Activated naive CD4-positive, alpha-beta T cell treated with anti-CD3 and anti-CD28 coated beads, Interleukin-2, amount 10 ng/mL, durations not matched to agents 7 days and 5 days (primary cell): ENCODE measurements at regions of chr5 and their contacts with region 1.

Region 1: GRCh38 chr5:160439205-160439600 is 17.5 kb downstream of the PTTG1 start:
- DNase-seq: peak; percentile 88
- H3K4me3 Mint-ChIP-seq: peak overlapping the region; percentile 80
- H3K27ac Mint-ChIP-seq: peak overlapping the region; percentile 72
- H3K4me1 Mint-ChIP-seq: peaks cover 27% of the 10 kb centered on the region
- H3K27me3 Mint-ChIP-seq: peaks cover 18% of the 10 kb centered on the region

Region 2: DNA sequence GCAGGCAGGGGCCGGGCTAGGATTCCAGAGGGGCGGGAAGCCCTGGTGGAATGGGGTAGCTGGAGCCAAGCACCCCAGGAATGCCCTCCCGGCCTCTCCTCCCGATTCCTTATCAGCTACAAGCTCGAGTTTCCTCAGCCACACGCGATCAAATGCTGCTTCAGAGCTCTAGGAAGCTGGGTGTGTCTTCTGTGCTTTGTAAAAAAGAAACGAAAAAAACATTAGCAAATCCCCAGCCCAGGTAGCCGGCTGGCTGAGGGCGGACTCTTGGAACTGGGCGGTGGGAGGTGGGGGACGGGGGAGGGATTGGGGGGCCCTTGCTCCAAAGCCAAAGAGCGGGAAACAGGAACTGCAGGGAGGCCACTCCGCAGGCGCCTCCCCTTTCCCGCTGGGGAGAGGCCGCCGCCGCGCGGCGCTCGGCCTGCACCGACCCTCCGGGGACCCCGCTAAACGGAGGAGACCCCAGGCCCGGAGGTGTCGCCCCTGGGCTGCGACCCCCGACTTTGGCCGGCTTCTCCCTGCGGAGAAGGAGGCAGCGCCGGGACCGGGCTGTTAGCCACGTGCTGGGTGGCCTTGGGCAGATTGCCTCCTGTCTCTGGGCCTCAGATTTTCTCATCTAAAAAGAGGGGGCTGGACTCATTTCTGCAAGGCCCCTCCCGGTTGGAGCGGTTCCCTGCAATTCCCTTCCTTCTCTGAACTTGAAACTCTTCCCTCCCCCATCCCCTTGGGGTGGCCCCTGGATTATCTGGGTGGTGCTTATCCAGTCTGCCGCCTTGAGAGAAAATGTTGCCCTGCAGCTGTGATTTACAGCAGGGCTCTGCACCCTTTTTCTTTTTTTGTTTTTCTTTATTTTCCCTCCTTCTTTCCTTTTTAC is 250.8 kb before region 1 on chr5:
- CTCF ChIA-PET with region 1: no interaction called
- DNase-seq: peak; percentile 24
- H3K4me3 Mint-ChIP-seq: peak overlapping the region; percentile 46
- H3K27ac Mint-ChIP-seq: no peak overlapping the region
- H3K4me1 Mint-ChIP-seq: peaks cover 10% of the 10 kb centered on the region
- H3K27me3 Mint-ChIP-seq: peaks cover 43% of the 10 kb centered on the region

Region 3: DNA sequence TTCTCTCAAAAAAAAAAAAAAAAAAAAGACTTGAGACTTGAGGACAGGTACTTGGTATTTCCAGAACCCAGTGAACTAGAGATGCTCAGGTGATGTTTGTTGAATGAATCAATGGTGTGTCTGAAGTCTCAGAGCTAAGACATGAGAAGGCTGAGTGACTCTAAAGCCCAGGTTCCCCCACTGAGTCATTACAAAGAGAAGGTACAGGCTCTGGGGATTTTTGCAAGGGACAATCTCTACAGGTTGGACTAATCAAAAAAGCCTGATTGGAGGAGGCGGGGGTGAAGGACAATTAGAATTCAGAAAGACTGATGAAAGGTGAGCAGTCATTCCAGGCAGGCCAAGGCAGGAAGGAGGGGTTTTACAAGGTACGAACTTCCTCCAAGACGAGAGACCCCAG is 218.1 kb before region 1 on chr5:
- CTCF ChIA-PET with region 1: no interaction called
- DNase-seq: no peak
- H3K4me3 Mint-ChIP-seq: no peak overlapping the region
- H3K27ac Mint-ChIP-seq: no peak overlapping the region
- H3K4me1 Mint-ChIP-seq: no peaks in the 10 kb centered on the region
- H3K27me3 Mint-ChIP-seq: peaks cover 18% of the 10 kb centered on the region

Region 4: DNA sequence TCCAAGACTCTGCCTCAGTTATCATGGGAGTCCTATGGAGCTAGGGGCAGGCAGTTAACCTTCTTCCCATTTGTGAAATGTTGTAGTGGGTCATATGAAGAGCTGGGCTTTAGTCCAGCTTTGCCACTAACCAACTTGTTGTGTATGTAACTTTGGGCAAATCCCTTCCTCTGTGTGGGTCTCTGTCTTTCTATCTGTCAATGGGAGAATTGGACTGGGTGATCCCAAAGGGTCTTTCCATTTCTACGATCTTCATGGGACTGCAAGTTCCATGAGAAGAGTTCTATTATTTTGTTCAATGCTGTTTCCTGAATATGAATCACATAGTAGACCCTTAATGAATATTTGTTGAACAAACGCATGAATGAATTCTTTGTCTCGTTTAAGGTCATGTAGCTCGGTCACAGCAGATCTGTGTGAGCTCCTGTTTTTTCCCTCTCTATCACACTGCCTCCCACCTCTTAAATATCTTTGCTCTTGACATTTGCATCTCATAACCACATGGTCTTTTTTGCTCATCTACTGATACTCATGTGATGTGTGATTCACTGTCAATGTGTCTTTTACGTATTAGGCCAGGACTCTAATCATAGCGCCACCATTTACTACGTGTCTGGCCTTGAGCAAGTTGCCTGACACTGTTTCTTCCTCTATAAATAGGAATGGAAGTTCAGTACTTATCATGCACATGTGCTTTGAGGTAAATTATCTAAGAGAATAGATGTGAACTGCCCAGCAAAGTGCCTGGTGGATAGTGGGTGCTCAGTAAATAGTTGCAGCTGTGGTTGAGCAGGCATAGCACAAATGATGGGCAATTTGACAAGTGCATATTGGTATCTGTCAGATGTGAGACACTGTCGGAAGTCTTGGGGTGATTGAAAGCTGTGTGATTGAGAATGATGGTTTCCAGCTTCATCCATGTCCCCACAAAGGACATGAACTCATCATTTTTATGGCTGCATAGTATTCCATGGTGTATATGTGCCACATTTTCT is 19.9 kb after region 1 on chr5:
- CTCF ChIA-PET with region 1: interaction called, 117 read pairs
- DNase-seq: no peak
- H3K4me3 Mint-ChIP-seq: no peak overlapping the region
- H3K27ac Mint-ChIP-seq: no peak overlapping the region
- H3K4me1 Mint-ChIP-seq: peaks cover 10% of the 10 kb centered on the region
- H3K27me3 Mint-ChIP-seq: no peaks in the 10 kb centered on the region

Region 5: DNA sequence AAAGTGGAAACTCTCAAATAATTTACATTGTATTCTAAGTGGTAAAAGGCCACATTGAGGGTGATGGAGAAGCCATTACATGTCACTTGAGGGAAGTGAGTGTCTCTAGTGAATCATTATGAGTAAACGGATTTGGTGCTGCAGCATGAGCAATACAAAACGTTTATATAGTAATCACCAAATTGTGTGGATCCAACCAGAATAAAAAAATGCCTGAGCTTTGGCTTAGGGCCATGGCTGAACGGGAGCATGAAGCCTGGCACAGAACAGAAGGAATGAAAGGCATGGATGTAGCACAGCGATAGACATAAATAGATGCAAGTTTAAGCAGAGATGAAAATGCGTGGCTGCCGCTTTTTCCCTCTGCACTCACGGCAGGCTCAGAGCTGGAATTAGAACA is 40.7 kb after region 1 on chr5:
- CTCF ChIA-PET with region 1: interaction called, 24 read pairs
- DNase-seq: no peak
- H3K4me3 Mint-ChIP-seq: no peak overlapping the region
- H3K27ac Mint-ChIP-seq: peak overlapping the region; percentile 75
- H3K4me1 Mint-ChIP-seq: peaks cover 40% of the 10 kb centered on the region
- H3K27me3 Mint-ChIP-seq: no peaks in the 10 kb centered on the region

Region 6: GRCh38 chr5:160508780-160509361 is 69.7 kb after region 1 on chr5:
- CTCF ChIA-PET with region 1: interaction called, 163 read pairs
- DNase-seq: peak; percentile 69
- H3K4me3 Mint-ChIP-seq: no peak overlapping the region
- H3K27ac Mint-ChIP-seq: no peak overlapping the region
- H3K4me1 Mint-ChIP-seq: peaks cover 31% of the 10 kb centered on the region
- H3K27me3 Mint-ChIP-seq: peaks cover 14% of the 10 kb centered on the region

Region 7: DNA sequence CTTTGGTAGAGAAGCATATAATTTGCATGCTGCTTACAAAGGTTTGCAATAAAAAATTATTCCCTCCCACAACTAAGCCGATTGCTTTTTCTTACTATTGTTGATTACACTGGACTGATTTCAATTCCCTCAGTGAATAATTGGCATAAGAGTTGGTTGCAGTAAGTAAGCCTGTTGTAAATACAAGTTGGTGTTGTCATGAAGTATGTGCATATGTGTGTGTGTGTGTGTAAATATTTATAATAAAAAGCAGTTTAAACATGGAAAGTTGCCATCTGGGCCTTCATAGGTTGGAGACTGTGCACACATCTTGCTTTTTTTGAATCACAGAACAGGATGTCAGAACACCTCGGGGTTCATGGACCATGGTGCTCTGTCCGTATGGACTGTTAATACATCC is 281.6 kb after region 1 on chr5:
- CTCF ChIA-PET with region 1: no interaction called
- DNase-seq: no peak
- H3K4me3 Mint-ChIP-seq: no peak overlapping the region
- H3K27ac Mint-ChIP-seq: no peak overlapping the region
- H3K4me1 Mint-ChIP-seq: no peaks in the 10 kb centered on the region
- H3K27me3 Mint-ChIP-seq: no peaks in the 10 kb centered on the region